ENCODE measurements at regions of chr4 and their contacts with region 1.

Region 1: DNA sequence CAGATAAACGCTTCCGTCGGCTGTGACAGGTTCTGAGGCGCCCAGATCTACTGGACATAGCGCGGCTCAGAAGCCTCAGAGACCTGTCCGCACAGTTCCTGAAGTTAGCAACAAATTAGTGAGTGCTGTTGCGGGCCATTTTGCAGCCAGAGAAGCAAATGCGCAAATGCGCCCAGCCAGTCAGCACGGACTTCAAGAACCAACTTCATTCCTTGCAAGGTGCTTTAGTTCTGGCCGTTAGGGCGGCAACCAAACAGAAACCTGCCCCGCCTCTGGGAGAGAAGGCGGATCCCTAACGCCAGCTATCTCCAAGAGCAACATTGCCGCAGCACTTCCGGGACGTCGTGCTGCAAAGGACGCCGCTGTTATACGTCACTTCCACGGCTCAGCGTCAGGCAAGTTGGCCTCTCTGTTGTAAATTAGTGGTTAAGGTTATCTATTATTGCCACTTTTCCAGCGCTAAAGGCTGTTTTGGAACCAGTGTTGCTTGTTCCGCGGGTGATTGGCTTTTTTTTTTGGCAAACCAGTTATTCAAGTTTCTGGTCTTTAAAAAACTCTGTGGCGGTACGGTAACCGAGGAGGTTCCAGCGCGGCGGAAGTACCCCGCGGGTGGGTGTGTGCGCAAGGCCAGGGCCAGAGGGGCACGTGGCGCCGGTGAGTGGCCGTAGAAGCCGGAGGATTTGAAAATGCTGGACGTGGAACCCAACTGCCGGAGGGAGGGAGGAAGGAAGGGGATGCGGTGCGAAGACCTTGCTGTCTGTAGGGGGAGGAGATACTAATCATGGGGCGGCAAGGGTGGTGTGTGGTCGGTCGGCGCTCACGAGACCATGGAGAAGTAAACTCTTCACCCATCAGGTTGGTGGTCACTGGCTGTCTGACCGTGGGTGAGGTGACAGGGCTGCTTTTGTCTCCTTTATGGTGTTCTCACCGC is at the start of gene GAR1:
- DNase-seq: peak; percentile 94
- ATAC-seq: peak; percentile 92
- H3K4me3 Mint-ChIP-seq: peak within 1 kb of the TSS; percentile 99
- H3K27ac Mint-ChIP-seq: peak within 1 kb of the TSS; percentile 99
- H3K4me1 Mint-ChIP-seq: peaks cover 49% of the 10 kb centered on the region
- H3K27me3 Mint-ChIP-seq: no peaks in the 10 kb centered on the region
- total RNA-seq, gene GAR1: 37.4 to 42.2 TPM

Region 2: DNA sequence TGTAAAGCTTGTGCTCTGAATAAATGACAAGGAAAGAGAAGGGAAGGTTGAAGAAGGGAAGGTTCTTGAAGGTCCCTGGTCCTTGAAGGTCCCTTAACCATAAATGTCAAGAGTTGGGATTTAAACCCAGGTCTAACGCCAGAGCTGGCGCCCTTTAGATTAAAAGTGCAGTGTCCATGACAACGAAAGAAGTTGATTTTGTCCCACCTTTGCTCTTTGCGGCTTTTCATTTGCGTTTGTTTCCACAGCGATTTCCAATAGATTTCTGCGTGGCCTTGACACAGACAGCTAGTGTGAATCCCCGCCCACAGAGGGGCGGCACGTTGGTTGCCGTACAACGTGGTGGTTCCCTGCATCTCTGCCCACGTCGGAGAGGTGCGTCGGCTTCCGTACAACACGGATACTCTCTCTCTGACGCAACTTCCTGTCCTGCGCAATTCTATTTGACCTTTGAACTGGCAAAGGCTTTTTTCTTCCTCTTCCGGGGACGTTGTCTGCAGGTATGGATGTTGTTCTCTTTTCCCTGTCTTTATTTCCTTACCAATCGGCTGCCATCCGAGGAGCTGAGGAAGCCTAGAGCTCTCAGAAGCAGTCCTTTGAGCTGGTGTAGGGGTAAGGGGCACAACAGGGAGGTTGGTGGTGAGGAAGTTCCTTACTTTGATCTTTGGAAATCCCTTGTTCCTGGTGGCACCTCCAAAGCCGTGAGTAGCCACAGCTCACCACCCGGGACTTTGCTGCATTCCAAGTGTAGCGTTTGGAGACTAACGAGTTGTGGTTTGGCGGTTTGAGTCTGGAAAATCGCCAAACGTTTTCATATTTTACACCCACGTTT is 1195.1 kb before region 1 on chr4 and contains the start of gene RPL34:
- CTCF ChIA-PET with region 1: no interaction called
- POLR2A ChIA-PET with region 1: no interaction called
- intact Hi-C with region 1: loop called in 1 of 2 experiments (anchors 1 kb)
- DNase-seq: peak; percentile 98
- ATAC-seq: peak; percentile 91
- H3K4me3 Mint-ChIP-seq: peak within 1 kb of the TSS; percentile 90
- H3K27ac Mint-ChIP-seq: peak within 1 kb of the TSS; percentile 98
- H3K4me1 Mint-ChIP-seq: peaks cover 47% of the 10 kb centered on the region
- H3K27me3 Mint-ChIP-seq: no peaks in the 10 kb centered on the region
- total RNA-seq, gene RPL34: 1,121 to 1,847 TPM

Region 3: GRCh38 chr4:109433205-109434006 is 382.0 kb before region 1 on chr4 and contains the start of gene SEC24B:
- CTCF ChIA-PET with region 1: interaction called, 9 read pairs
- POLR2A ChIA-PET with region 1: interaction called, 3 read pairs
- intact Hi-C with region 1: loop called (anchors 1 to 2 kb)
- DNase-seq: peak; percentile 94
- ATAC-seq: peak; percentile 82
- H3K4me3 Mint-ChIP-seq: peak within 1 kb of the TSS; percentile 83
- H3K27ac Mint-ChIP-seq: peak within 1 kb of the TSS; percentile 93
- H3K4me1 Mint-ChIP-seq: peaks cover 61% of the 10 kb centered on the region
- H3K27me3 Mint-ChIP-seq: no peaks in the 10 kb centered on the region
- total RNA-seq, gene SEC24B: 24.6 to 35.9 TPM

Region 4: DNA sequence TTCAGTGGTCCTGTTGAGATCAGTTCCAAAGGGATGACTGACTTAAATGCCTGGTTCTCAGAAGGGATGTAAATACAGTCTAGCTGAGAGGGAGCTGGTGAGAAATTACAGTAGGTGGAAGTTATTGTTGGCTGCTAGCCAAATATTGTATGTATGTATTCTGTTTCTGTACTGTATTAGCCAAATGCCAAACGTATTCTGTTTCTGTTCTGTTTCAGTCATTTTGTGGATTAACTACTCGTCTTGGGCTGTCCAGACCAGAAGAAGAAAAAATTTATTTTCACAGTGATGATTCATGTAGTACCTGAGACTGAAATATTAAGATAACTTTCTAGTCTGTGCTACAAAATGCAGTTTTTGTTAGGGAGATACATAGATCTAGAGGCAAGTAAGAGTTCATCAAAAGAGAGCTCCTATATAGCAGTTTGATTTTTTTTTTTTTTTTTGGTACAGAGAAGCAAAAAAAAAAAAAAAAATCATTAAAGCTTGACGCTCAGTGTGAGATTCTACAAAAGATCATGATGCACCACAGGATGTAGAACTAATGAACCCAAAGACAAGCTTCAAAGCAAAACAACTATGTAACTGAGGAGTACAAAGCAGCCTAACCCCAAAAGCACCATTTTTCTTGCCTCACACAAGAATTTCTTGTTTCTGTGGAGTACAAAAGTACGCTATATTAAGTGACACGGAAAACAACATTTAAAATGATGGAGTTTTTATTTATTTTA is 167.0 kb before region 1 on chr4:
- CTCF ChIA-PET with region 1: no interaction called
- POLR2A ChIA-PET with region 1: no interaction called
- intact Hi-C with region 1: loop called in 1 of 2 experiments (anchors 5 kb)
- DNase-seq: no peak
- ATAC-seq: peak; percentile 34
- H3K4me3 Mint-ChIP-seq: peak overlapping the region; percentile 47
- H3K27ac Mint-ChIP-seq: peak overlapping the region; percentile 88
- H3K4me1 Mint-ChIP-seq: peaks cover 45% of the 10 kb centered on the region
- H3K27me3 Mint-ChIP-seq: no peaks in the 10 kb centered on the region

Region 5: DNA sequence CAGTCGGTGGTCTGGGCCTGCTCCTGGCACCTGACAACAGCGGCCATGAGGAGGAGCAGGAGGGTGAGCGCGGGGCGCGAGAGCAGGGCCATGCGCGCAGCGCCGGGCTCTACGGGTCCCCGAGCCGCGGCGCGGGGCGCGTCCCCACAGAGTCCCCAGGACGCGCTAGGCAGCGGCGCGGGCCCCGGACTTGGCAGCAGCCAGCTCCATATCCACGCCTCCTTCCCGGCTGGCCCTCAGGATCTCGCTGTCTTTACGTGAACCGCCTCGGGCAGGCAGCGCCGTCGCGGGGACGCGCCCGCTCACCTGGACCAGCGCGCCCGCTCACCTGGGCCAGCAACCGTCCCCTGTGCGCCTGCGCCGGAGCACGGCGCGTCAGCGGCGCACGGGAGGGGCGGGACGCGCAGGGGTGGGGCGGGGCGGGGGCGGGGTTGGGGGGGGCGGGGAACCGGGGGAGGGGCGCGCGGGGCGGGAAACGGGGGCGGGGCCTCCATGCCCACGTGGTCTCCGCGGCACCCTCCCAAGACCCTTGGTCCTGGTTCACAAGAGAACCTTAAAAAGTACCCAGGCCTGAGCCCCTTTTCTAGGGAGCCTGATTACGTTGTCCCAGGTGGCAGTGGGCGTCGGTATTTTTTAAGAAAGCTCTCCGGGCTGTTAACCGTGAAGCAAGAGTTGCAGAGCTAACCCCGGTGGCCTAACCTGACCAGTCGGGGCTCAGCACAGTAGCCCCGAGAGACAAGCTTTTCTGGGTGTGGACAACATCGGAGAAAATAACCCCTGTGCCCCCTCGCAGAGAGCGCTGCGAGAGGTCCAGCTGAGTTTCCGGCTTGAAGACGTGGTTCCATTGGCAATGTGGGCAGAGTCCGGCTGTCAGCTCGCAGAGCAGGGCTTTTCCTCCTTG is 85.4 kb before region 1 on chr4 and contains the start of gene PLA2G12A:
- CTCF ChIA-PET with region 1: no interaction called
- POLR2A ChIA-PET with region 1: no interaction called
- intact Hi-C with region 1: loop called (anchors 1 to 2 kb)
- DNase-seq: peak; percentile 85
- ATAC-seq: peak; percentile 87
- H3K4me3 Mint-ChIP-seq: peak within 1 kb of the TSS; percentile 84
- H3K27ac Mint-ChIP-seq: peak within 1 kb of the TSS; percentile 71
- H3K4me1 Mint-ChIP-seq: peaks cover 14% of the 10 kb centered on the region
- H3K27me3 Mint-ChIP-seq: no peaks in the 10 kb centered on the region
- total RNA-seq, gene PLA2G12A: 17.9 to 31.1 TPM

Region 6: GRCh38 chr4:109752525-109752924 is 62.9 kb before region 1 on chr4:
- CTCF ChIA-PET with region 1: no interaction called
- POLR2A ChIA-PET with region 1: no interaction called
- intact Hi-C with region 1: no loop called
- DNase-seq: no peak
- ATAC-seq: no peak
- H3K4me3 Mint-ChIP-seq: no peak overlapping the region
- H3K27ac Mint-ChIP-seq: no peak overlapping the region
- H3K4me1 Mint-ChIP-seq: no peaks in the 10 kb centered on the region
- H3K27me3 Mint-ChIP-seq: peaks cover 4% of the 10 kb centered on the region

Region 7: DNA sequence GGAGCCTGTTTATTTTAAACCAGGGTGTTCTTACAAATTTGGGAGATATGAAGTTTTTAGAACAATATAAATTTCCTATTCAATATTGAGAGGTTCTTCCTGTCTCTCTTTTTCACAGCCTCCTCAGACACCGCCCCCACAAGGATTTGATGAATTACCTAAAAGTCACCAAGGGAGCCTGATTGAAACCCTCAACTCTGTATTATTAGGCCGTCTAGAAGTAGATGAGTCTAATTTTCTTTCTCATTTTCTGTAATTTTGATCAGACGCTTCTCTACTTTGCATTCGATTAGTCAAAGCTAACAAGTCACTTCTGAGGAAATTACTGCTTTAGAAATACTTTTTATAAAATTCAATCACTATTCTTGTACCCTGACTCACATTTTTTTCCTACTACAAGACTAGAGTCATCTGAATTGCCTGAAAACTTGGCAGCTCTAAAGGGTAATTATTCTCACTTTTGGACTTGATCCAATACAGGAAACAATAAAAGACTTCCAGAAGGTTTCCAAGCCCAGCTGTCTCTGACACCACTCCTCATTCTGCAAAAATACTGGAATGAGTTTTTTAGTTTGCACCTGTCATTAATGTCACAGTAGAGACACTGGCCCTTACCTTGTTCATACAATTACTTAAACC is 271.8 kb after region 1 on chr4:
- CTCF ChIA-PET with region 1: no interaction called
- POLR2A ChIA-PET with region 1: no interaction called
- intact Hi-C with region 1: loop called in 1 of 2 experiments (anchors 5 kb)
- DNase-seq: peak; percentile 12
- ATAC-seq: peak; percentile 40
- H3K4me3 Mint-ChIP-seq: no peak overlapping the region
- H3K27ac Mint-ChIP-seq: peak overlapping the region; percentile 96
- H3K4me1 Mint-ChIP-seq: peaks cover 68% of the 10 kb centered on the region
- H3K27me3 Mint-ChIP-seq: no peaks in the 10 kb centered on the region

Region 8: DNA sequence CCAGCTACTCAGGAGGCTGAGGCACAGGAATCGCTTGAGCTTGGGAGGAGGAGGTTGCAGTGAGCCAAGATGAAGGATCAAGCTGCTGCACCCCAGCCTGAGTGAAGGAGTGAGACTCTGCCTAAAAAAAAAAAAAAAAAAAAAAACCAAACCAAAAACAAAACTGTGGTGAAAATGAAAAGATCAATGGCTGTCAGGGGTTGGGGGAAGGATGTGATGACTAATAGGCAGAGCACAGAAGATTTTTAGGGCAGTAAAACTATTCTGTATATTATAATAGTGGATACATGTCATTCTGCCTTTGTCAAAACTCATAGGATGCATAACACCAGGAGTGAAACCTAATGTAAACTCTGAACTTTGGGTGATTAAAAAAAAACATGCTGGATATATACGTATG is 452.9 kb after region 1 on chr4:
- CTCF ChIA-PET with region 1: no interaction called
- POLR2A ChIA-PET with region 1: no interaction called
- intact Hi-C with region 1: no loop called
- DNase-seq: peak; percentile 10
- ATAC-seq: peak; percentile 94
- H3K4me3 Mint-ChIP-seq: no peak overlapping the region
- H3K27ac Mint-ChIP-seq: no peak overlapping the region
- H3K4me1 Mint-ChIP-seq: peaks cover 4% of the 10 kb centered on the region
- H3K27me3 Mint-ChIP-seq: peaks cover 11% of the 10 kb centered on the region

Measured in activated CD4-positive, alpha-beta T cell treated with anti-CD3 and anti-CD28 coated beads for 36 hours (primary cell).